Naive thymus-derived CD4-positive, alpha-beta T cell (primary cell): ENCODE measurements at regions of chr14 and their contacts with region 1.

Region 1: GRCh38 chr14:74084277-74085046 is at the starts of genes ALDH6A1 and LIN52:
- DNase-seq: peak; percentile 90 to 100 (median 100)
- ATAC-seq: peak; percentile 92
- H3K4me3 ChIP-seq: peak within 1 kb of the TSS; percentile 78
- H3K4me3 Mint-ChIP-seq: peak within 1 kb of the TSS; percentile 89 to 100 (median 96)
- H3K27ac ChIP-seq: peak within 1 kb of the TSS; percentile 77
- H3K27ac Mint-ChIP-seq: peak within 1 kb of the TSS; percentile 90 to 99 (median 94)
- H3K4me1 ChIP-seq: peaks cover 10 to 16% of the 10 kb centered on the region in 2 donors
- H3K4me1 Mint-ChIP-seq: peaks cover 23 to 62% (median 44%) of the 10 kb centered on the region in 7 donors
- H3K27me3 ChIP-seq: no peaks in the 10 kb centered on the region
- H3K27me3 Mint-ChIP-seq: peaks cover 0 to 4% (median 0%) of the 10 kb centered on the region in 5 donors
- total RNA-seq, gene ALDH6A1: 8.9 to 23.7 (median 19.2) TPM
- total RNA-seq, gene LIN52: 6.6 to 16.3 (median 9.4) TPM

Region 2: GRCh38 chr14:73026845-73027542 is 1057.5 kb before region 1 on chr14 and contains the start of gene ZFYVE1:
- CTCF ChIA-PET with region 1: no interaction called
- POLR2A ChIA-PET with region 1: no interaction called
- intact Hi-C with region 1: loop called in 1 of 2 experiments (anchors 1 kb)
- DNase-seq: peak; percentile 65 to 91 (median 86)
- ATAC-seq: peak; percentile 100
- H3K4me3 ChIP-seq: peak within 1 kb of the TSS; percentile 74
- H3K4me3 Mint-ChIP-seq: peak within 1 kb of the TSS; percentile 80 to 99 (median 96)
- H3K27ac ChIP-seq: peak within 1 kb of the TSS; percentile 74
- H3K27ac Mint-ChIP-seq: peak within 1 kb of the TSS; percentile 71 to 96 (median 83)
- H3K4me1 ChIP-seq: peaks cover 11 to 12% of the 10 kb centered on the region in 2 donors
- H3K4me1 Mint-ChIP-seq: peaks cover 33 to 50% (median 45%) of the 10 kb centered on the region in 7 donors
- H3K27me3 ChIP-seq: no peaks in the 10 kb centered on the region
- H3K27me3 Mint-ChIP-seq: no peaks in the 10 kb centered on the region
- total RNA-seq, gene ZFYVE1: 15.3 to 24.8 (median 19.1) TPM

Region 3: GRCh38 chr14:73458151-73458976 is 626.1 kb before region 1 on chr14 and contains the start of gene NUMB:
- CTCF ChIA-PET with region 1: no interaction called
- POLR2A ChIA-PET with region 1: no interaction called
- intact Hi-C with region 1: loop called in 1 of 2 experiments (anchors 1 kb)
- DNase-seq: peak; percentile 70 to 99 (median 98)
- ATAC-seq: peak; percentile 99
- H3K4me3 ChIP-seq: peak within 1 kb of the TSS; percentile 71
- H3K4me3 Mint-ChIP-seq: peak within 1 kb of the TSS; percentile 87 to 100 (median 98)
- H3K27ac ChIP-seq: peak within 1 kb of the TSS; percentile 82
- H3K27ac Mint-ChIP-seq: peak within 1 kb of the TSS; percentile 80 to 98 (median 94)
- H3K4me1 ChIP-seq: peaks cover 0 to 9% of the 10 kb centered on the region in 2 donors
- H3K4me1 Mint-ChIP-seq: peaks cover 32 to 48% (median 45%) of the 10 kb centered on the region in 7 donors
- H3K27me3 ChIP-seq: no peaks in the 10 kb centered on the region
- H3K27me3 Mint-ChIP-seq: no peaks in the 10 kb centered on the region
- total RNA-seq, gene NUMB: 48.9 to 90.6 (median 49.4) TPM

Region 4: DNA sequence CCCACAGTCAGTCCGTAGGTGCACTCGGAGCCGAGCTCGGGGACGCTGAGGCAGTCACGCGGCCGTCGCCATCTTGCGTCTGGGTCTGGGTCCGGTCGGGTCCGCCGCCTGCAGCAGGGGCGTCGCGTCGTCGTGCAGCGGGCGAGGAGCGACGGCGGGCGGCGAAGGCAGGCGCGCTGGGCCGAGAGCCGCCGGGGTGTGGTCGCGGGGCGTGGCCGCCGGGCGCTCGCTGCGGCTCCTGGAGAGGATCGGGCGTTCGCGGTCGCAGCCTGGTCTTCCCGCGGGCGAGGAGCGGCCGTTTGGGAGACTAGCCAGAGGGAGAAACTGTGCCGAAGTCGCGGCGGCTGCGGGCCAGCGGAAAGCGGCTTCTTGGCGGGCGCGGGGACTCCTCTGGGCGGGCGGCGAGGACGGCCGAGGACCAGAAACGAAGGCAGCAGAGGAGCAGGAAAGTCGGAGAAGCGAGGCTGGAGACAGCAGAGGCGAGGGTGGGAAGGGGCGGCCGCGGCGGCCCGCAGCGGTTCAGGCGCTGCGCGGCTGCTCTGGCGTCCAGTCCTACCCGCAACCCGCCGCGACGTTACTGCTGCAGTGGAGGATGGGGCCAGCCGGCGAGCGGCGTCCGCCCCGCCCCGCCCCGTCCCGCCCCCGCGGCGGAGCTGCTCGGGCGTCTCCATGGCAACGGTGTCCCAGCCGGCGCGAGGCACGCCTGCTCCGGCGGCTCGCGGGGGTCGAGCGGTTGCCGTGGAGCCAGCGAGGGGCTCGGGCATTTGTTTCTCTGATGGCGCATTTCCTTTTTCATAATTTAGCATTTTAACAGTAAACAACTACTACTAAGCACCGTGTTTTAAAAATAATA is 370.4 kb before region 1 on chr14 and contains the start of gene PNMA1:
- CTCF ChIA-PET with region 1: no interaction called
- POLR2A ChIA-PET with region 1: no interaction called
- intact Hi-C with region 1: loop called in 1 of 2 experiments (anchors 1 kb)
- DNase-seq: peak; percentile 76 to 90 (median 83)
- ATAC-seq: peak; percentile 91
- H3K4me3 ChIP-seq: peak within 1 kb of the TSS; percentile 92
- H3K4me3 Mint-ChIP-seq: peak within 1 kb of the TSS; percentile 91 to 100 (median 97)
- H3K27ac ChIP-seq: peak within 1 kb of the TSS; percentile 83
- H3K27ac Mint-ChIP-seq: peak within 1 kb of the TSS; percentile 93 to 99 (median 96)
- H3K4me1 ChIP-seq: peaks cover 3 to 4% of the 10 kb centered on the region in 2 donors
- H3K4me1 Mint-ChIP-seq: peaks cover 22 to 40% (median 26%) of the 10 kb centered on the region in 7 donors
- H3K27me3 ChIP-seq: no peaks in the 10 kb centered on the region
- H3K27me3 Mint-ChIP-seq: no peaks in the 10 kb centered on the region
- total RNA-seq, gene PNMA1: 21.6 to 40.4 (median 37.1) TPM

Region 5: GRCh38 chr14:73886449-73887317 is 197.8 kb before region 1 on chr14 and contains the start of gene ZNF410:
- CTCF ChIA-PET with region 1: interaction called, 3 read pairs
- POLR2A ChIA-PET with region 1: interaction called, 4 read pairs
- intact Hi-C with region 1: loop called (anchors 1 to 2 kb)
- DNase-seq: peak; percentile 74 to 94 (median 83)
- ATAC-seq: peak; percentile 99
- H3K4me3 ChIP-seq: peak within 1 kb of the TSS; percentile 82
- H3K4me3 Mint-ChIP-seq: peak within 1 kb of the TSS; percentile 90 to 99 (median 98)
- H3K27ac ChIP-seq: peak within 1 kb of the TSS; percentile 97
- H3K27ac Mint-ChIP-seq: peak within 1 kb of the TSS; percentile 64 to 100 (median 99)
- H3K4me1 ChIP-seq: peaks cover 17 to 22% of the 10 kb centered on the region in 2 donors
- H3K4me1 Mint-ChIP-seq: peaks cover 24 to 56% (median 47%) of the 10 kb centered on the region in 7 donors
- H3K27me3 ChIP-seq: no peaks in the 10 kb centered on the region
- H3K27me3 Mint-ChIP-seq: no peaks in the 10 kb centered on the region
- total RNA-seq, gene ZNF410: 44.8 to 79.7 (median 51.1) TPM

Region 6: GRCh38 chr14:74217672-74218448 is 133.4 kb after region 1 on chr14:
- CTCF ChIA-PET with region 1: no interaction called
- POLR2A ChIA-PET with region 1: no interaction called
- intact Hi-C with region 1: no loop called
- DNase-seq: peak; percentile 41 to 78 (median 59)
- ATAC-seq: peak; percentile 91
- H3K4me3 ChIP-seq: peak overlapping the region; percentile 36
- H3K4me3 Mint-ChIP-seq: peak overlapping the region in 8 of 10 donors; percentile 12 to 64 (median 54)
- H3K27ac ChIP-seq: no peak overlapping the region
- H3K27ac Mint-ChIP-seq: peak overlapping the region in 1 of 9 donors; percentile 36
- H3K4me1 ChIP-seq: peaks cover 0 to 6% of the 10 kb centered on the region in 2 donors
- H3K4me1 Mint-ChIP-seq: peaks cover 0 to 5% (median 0%) of the 10 kb centered on the region in 7 donors
- H3K27me3 ChIP-seq: no peaks in the 10 kb centered on the region
- H3K27me3 Mint-ChIP-seq: peaks cover 7 to 26% (median 13%) of the 10 kb centered on the region in 5 donors

Region 7: GRCh38 chr14:74302634-74303577 is 218.4 kb after region 1 on chr14 and contains the start of gene ABCD4:
- CTCF ChIA-PET with region 1: no interaction called
- POLR2A ChIA-PET with region 1: no interaction called
- intact Hi-C with region 1: loop called (anchors 1 kb)
- DNase-seq: peak; percentile 50 to 85 (median 65)
- ATAC-seq: peak; percentile 95
- H3K4me3 ChIP-seq: peak within 1 kb of the TSS; percentile 87
- H3K4me3 Mint-ChIP-seq: peak within 1 kb of the TSS; percentile 90 to 100 (median 96)
- H3K27ac ChIP-seq: peak within 1 kb of the TSS; percentile 77
- H3K27ac Mint-ChIP-seq: peak within 1 kb of the TSS; percentile 81 to 99 (median 96)
- H3K4me1 ChIP-seq: peaks cover 17 to 19% of the 10 kb centered on the region in 2 donors
- H3K4me1 Mint-ChIP-seq: peaks cover 18 to 49% (median 33%) of the 10 kb centered on the region in 7 donors
- H3K27me3 ChIP-seq: no peaks in the 10 kb centered on the region
- H3K27me3 Mint-ChIP-seq: no peaks in the 10 kb centered on the region
- total RNA-seq, gene ABCD4: 57.6 to 109 (median 68.2) TPM

Region 8: GRCh38 chr14:75293920-75294642 is 1209.6 kb after region 1 on chr14:
- CTCF ChIA-PET with region 1: no interaction called
- POLR2A ChIA-PET with region 1: no interaction called
- intact Hi-C with region 1: loop called in 1 of 2 experiments (anchors 10 kb)
- DNase-seq: peak; percentile 92 to 98 (median 96)
- ATAC-seq: peak; percentile 92
- H3K4me3 ChIP-seq: peak overlapping the region; percentile 61
- H3K4me3 Mint-ChIP-seq: peak overlapping the region; percentile 79 to 93 (median 91)
- H3K27ac ChIP-seq: peak overlapping the region; percentile 96
- H3K27ac Mint-ChIP-seq: peak overlapping the region; percentile 85 to 97 (median 94)
- H3K4me1 ChIP-seq: peaks cover 17 to 25% of the 10 kb centered on the region in 2 donors
- H3K4me1 Mint-ChIP-seq: peaks cover 10 to 26% (median 22%) of the 10 kb centered on the region in 7 donors
- H3K27me3 ChIP-seq: no peaks in the 10 kb centered on the region
- H3K27me3 Mint-ChIP-seq: peaks cover 0 to 24% (median 0%) of the 10 kb centered on the region in 5 donors